Activated CD8-positive, alpha-beta T cell treated with anti-CD3 and anti-CD28 coated beads for 36 hours (primary cell): ENCODE measurements at regions of chr19 and their contacts with region 1.

Region 1: DNA sequence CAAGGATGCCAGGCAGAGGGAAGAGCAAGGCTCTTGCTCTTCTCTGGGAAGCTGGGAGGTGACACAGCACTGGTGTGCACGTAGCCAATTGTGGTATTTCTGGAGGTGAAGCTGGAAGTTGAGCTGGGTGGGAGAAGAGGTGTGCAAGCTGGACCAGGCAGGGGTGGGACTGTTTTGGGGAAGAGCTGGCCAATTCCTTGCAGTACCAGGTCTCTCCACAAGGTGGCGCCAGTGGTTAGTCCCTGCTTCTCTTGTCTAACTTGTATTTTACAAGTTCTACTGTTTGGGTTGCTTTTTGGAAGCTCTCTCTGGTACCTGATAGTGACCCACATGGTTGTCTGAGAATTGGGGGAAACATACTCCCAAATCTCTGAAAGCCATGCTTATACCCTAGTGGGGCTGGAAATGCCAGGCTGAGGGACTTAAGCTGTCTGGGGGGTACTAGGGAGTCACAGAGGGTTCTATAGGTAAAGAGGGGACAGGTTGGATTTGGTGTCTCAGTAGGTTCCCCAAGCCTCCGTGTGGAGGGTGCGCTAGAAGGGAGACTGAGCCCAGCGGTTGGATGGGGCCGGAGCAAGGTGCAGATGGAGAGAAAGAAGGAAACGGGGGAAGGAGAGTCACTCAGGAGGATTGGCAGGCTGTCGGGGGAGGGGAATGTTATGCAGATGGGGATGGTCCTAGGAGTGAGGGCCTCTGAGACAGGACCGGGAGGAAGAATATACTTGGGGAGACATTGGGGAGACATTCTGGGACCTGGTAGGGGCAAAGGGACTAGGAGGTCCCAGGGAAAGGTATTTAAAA is 3.0 kb downstream of the HPN start:
- DNase-seq: peak; percentile 69
- ATAC-seq: no peak
- H3K4me3 Mint-ChIP-seq: no peak overlapping the region
- H3K27ac Mint-ChIP-seq: no peak overlapping the region
- H3K4me1 Mint-ChIP-seq: peaks cover 13% of the 10 kb centered on the region
- H3K27me3 Mint-ChIP-seq: peaks cover 6% of the 10 kb centered on the region
- CTCF ChIP-seq: peak; percentile 98

Region 2: DNA sequence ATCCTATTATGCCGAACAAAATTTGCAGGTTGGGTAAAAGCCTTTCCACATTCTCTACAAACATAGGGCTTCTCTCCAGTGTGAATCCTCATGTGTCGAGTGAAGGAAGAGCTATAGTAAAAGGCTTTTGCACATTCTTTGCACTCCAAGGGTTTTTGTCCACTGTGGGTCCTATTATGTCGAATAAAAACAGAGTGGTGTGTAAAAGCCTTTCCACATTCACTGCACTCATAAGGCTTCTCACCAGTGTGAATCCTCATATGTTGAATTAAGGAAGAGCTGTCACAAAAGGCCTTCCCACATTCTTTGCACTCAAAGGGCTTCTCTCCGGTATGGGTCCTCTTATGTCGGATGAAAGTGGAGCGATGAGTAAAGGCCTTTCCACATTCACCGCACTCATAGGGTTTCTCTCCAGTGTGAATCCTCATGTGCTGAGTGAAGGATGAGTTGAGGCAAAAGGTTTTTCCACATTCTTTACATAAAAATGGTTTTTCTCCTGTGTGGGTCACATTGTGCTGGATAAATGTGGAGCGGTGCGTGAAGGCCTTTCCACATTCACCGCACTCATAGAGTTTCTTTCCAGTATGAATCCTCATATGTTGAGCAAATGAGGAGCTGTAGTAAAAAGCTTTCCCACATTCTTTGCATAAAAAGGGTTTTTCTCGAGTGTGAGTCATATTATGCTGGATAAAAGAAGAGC is 285.1 kb before region 1 on chr19:
- CTCF ChIA-PET with region 1: no interaction called
- POLR2A ChIA-PET with region 1: no interaction called
- intact Hi-C with region 1: no loop called
- DNase-seq: no peak
- ATAC-seq: no peak
- H3K4me3 Mint-ChIP-seq: no peak overlapping the region
- H3K27ac Mint-ChIP-seq: no peak overlapping the region
- H3K4me1 Mint-ChIP-seq: no peaks in the 10 kb centered on the region
- H3K27me3 Mint-ChIP-seq: no peaks in the 10 kb centered on the region
- CTCF ChIP-seq: no peak

Region 3: DNA sequence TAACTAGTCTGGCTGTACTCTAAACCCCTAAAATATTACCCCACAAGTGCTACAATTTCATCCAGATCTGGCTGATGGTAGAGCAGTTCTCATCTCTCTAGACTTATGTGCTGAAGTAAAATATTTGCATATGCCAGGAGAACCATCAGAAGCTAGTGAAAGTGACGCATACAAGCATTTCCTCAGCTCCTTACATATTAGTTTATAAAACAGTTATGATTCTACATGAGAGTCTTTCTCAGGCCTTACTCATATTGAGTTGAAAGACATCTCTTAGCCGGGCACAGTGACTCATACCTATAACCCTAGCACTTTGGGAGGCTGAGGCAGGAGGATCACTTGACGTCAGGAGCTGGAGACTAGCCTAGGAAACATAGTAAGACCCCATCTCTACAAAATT is 133.7 kb before region 1 on chr19:
- CTCF ChIA-PET with region 1: no interaction called
- POLR2A ChIA-PET with region 1: no interaction called
- intact Hi-C with region 1: no loop called
- DNase-seq: no peak
- ATAC-seq: no peak
- H3K4me3 Mint-ChIP-seq: no peak overlapping the region
- H3K27ac Mint-ChIP-seq: no peak overlapping the region
- H3K4me1 Mint-ChIP-seq: peaks cover 6% of the 10 kb centered on the region
- H3K27me3 Mint-ChIP-seq: peaks cover 24% of the 10 kb centered on the region
- CTCF ChIP-seq: no peak

Region 4: DNA sequence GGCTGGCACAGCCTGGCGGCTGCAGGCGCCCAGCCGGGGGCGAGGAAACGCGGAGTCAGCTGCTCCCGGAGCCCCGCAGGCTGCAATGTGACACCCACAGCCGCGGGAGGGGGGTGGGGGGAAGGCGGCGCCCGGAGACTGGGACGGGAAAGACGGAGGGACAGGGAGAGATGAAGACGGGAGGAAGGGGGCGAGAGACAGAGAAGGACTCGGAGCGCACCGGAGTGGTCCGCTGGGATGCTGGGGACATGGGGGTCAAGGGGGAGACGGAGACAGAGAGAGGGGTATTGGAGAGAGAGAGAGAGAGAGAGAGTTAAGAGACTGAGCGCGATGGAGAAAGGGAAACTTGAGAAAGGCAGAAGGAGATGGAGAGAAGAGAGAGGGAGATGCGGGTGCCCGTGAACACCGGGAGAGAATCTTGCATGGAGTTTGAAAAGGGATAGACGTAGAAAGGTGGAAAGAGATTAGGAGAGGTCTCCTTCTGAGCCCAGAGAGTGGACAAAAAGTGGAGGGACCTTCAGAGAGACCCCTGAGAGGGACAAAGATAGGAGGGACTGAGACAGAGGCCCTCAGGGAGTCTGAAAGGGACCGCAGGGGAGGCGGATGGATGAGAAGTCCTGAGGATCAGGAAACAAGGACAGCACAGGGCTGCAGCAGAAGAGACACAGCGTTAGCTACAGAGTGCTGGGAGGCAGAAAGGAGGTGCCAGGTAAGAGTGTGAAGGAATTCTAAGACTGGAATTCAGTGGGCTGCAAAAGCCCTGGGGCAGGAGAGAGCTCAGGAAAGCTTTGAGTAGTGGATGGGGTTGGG is 13.2 kb before region 1 on chr19:
- CTCF ChIA-PET with region 1: interaction called, 17 read pairs
- POLR2A ChIA-PET with region 1: interaction called, 6 read pairs
- intact Hi-C with region 1: no loop called
- DNase-seq: no peak
- ATAC-seq: no peak
- H3K4me3 Mint-ChIP-seq: peak overlapping the region; percentile 61
- H3K27ac Mint-ChIP-seq: no peak overlapping the region
- H3K4me1 Mint-ChIP-seq: peaks cover 11% of the 10 kb centered on the region
- H3K27me3 Mint-ChIP-seq: peaks cover 16% of the 10 kb centered on the region
- CTCF ChIP-seq: no peak

Region 5: GRCh38 chr19:35055715-35056179 is 11.2 kb after region 1 on chr19:
- CTCF ChIA-PET with region 1: interaction called, 40 read pairs
- POLR2A ChIA-PET with region 1: interaction called, 3 read pairs
- intact Hi-C with region 1: no loop called
- DNase-seq: peak; percentile 46
- ATAC-seq: peak; percentile 66
- H3K4me3 Mint-ChIP-seq: no peak overlapping the region
- H3K27ac Mint-ChIP-seq: no peak overlapping the region
- H3K4me1 Mint-ChIP-seq: no peaks in the 10 kb centered on the region
- H3K27me3 Mint-ChIP-seq: no peaks in the 10 kb centered on the region
- CTCF ChIP-seq: peak; percentile 14

Region 6: DNA sequence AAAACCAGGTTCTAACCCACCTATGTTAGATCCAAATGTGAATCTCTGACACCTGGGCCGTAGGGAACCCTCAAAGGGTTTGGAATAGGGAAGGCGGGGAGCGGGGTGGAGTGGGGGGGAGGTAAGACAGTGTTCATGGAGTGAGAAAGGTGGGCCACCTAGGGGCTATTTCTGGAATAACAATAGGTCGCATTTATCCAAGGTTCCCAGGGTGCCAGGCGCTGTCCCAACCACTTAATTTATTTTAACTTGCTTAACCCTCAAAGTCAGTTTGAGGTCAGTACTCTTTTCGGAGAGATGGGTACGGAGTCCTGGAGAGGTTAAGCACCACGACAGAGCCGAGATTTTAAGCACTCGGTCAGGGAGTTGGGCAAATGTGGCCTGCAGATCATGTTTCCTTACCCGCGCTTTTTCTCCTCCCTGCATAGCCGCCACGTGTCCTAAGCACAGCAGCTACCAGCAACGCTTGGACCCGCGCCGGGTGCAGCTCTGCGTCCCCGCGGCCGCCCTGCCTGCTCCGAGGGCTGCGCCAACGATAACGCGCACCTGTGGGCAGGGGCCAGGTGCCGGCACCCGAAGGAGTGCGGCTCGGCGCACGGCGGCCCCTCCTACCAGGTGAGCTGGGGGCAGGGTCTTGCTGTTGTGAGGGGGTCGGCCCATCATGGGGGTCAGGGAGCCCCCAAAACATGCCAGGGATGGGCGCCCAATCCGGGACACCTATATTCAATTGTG is 46.2 kb after region 1 on chr19:
- CTCF ChIA-PET with region 1: interaction called, 21 read pairs
- POLR2A ChIA-PET with region 1: interaction called, 3 read pairs
- intact Hi-C with region 1: no loop called
- DNase-seq: peak; percentile 66
- ATAC-seq: peak; percentile 96
- H3K4me3 Mint-ChIP-seq: peak overlapping the region; percentile 32
- H3K27ac Mint-ChIP-seq: no peak overlapping the region
- H3K4me1 Mint-ChIP-seq: peaks cover 8% of the 10 kb centered on the region
- H3K27me3 Mint-ChIP-seq: peaks cover 3% of the 10 kb centered on the region
- CTCF ChIP-seq: peak; percentile 75

Region 7: DNA sequence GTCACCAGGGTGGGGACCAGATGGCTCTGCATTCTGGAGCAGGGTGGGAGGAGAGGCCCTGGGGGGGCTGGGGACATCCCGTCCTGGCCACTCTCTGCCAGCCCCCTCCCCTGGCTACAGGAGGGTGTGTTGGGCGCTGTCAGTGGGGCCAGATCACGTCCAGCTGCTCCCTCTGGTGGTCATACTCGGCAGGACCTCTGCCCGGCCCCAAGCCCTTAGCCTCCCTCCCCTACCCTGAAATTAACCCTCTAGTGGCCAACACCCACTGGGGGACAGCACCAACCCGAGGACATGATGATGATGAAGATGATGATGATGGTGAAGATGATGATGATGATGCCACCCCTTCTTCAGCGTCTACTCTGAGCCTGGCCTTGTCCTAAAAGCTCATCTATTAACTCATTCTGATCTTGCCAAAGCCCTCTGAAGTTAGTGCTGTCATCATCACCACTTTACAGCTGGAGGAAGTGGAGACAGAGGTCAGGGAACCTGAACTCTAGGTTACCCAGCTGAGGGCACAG is 90.9 kb after region 1 on chr19:
- CTCF ChIA-PET with region 1: interaction called, 12 read pairs
- POLR2A ChIA-PET with region 1: no interaction called
- intact Hi-C with region 1: no loop called
- DNase-seq: peak; percentile 81
- ATAC-seq: peak; percentile 96
- H3K4me3 Mint-ChIP-seq: no peak overlapping the region
- H3K27ac Mint-ChIP-seq: no peak overlapping the region
- H3K4me1 Mint-ChIP-seq: peaks cover 4% of the 10 kb centered on the region
- H3K27me3 Mint-ChIP-seq: no peaks in the 10 kb centered on the region
- CTCF ChIP-seq: peak; percentile 75